Activated CD4-positive, alpha-beta T cell treated with anti-CD3 and anti-CD28 coated beads, Interleukin-2, amount 10 ng/mL, durations not matched to agents 7 days and 5 days (primary cell): ENCODE measurements at regions of chr6 and their contacts with region 1.

Region 1: DNA sequence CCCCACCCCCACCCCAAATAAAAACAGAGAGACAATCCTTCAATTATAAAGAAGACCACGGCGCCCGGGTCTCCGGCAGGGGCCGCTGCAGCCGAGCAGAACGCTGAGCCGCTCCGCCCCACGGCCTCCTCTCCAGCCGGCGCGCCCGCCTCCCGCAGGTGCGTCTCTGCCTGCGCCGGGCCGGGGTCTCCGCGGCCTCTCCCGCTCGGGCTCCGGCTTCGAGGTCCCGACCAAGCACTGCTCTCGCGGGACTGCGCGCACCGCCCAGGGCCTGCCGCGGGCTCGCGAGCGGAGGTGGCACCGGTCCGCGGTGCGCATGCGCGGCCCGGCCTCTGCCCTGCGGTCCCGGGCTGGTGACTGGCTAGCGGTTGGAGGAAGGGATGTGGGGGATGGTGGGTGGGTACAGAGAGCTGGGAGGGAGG is 241 bp upstream of the SIRT5 start:
- DNase-seq: peak; percentile 92
- H3K4me3 Mint-ChIP-seq: peak overlapping the region; percentile 88
- H3K27ac Mint-ChIP-seq: peak overlapping the region; percentile 98
- H3K4me1 Mint-ChIP-seq: peaks cover 34% of the 10 kb centered on the region
- H3K27me3 Mint-ChIP-seq: no peaks in the 10 kb centered on the region

Region 2: GRCh38 chr6:13328076-13328874 is 245.9 kb before region 1 on chr6 and contains the start of gene TBC1D7:
- CTCF ChIA-PET with region 1: interaction called, 12 read pairs
- POLR2A ChIA-PET with region 1: interaction called, 5 read pairs
- DNase-seq: peak; percentile 93
- H3K4me3 Mint-ChIP-seq: peak within 1 kb of the TSS; percentile 91
- H3K27ac Mint-ChIP-seq: peak within 1 kb of the TSS; percentile 97
- H3K4me1 Mint-ChIP-seq: peaks cover 29% of the 10 kb centered on the region
- H3K27me3 Mint-ChIP-seq: no peaks in the 10 kb centered on the region
- total RNA-seq, gene TBC1D7: 18.1 to 20.0 TPM

Region 3: DNA sequence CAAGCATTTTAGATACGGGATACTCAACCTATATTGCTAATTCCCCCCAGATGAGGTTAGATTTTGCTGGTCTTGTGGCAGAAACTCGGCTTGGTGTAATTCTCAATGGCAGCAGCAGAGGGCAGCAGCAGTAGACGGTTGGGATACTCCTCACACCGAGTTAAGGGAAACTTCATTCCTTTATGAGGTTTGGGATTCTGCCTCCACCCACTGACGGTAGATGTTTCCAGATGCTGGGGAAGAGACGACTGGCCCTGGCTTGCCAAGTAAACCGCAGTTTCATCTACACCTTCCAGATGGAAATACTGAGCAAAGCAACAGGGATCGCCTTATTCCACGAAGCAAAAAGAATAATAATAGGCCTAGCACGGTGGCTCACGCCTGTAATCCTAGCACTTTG is 237.6 kb before region 1 on chr6:
- CTCF ChIA-PET with region 1: interaction called, 17 read pairs
- POLR2A ChIA-PET with region 1: interaction called, 4 read pairs
- DNase-seq: peak; percentile 75
- H3K4me3 Mint-ChIP-seq: no peak overlapping the region
- H3K27ac Mint-ChIP-seq: no peak overlapping the region
- H3K4me1 Mint-ChIP-seq: peaks cover 32% of the 10 kb centered on the region
- H3K27me3 Mint-ChIP-seq: peaks cover 1% of the 10 kb centered on the region

Region 4: GRCh38 chr6:13561624-13562267 is 12.4 kb before region 1 on chr6:
- CTCF ChIA-PET with region 1: interaction called, 26 read pairs
- POLR2A ChIA-PET with region 1: interaction called, 6 read pairs
- DNase-seq: no peak
- H3K4me3 Mint-ChIP-seq: no peak overlapping the region
- H3K27ac Mint-ChIP-seq: no peak overlapping the region
- H3K4me1 Mint-ChIP-seq: no peaks in the 10 kb centered on the region
- H3K27me3 Mint-ChIP-seq: peaks cover 6% of the 10 kb centered on the region

Region 5: GRCh38 chr6:13586603-13587542 is 12.7 kb after region 1 on chr6:
- CTCF ChIA-PET with region 1: interaction called, 17 read pairs
- POLR2A ChIA-PET with region 1: no interaction called
- DNase-seq: no peak
- H3K4me3 Mint-ChIP-seq: no peak overlapping the region
- H3K27ac Mint-ChIP-seq: no peak overlapping the region
- H3K4me1 Mint-ChIP-seq: no peaks in the 10 kb centered on the region
- H3K27me3 Mint-ChIP-seq: no peaks in the 10 kb centered on the region

Region 6: DNA sequence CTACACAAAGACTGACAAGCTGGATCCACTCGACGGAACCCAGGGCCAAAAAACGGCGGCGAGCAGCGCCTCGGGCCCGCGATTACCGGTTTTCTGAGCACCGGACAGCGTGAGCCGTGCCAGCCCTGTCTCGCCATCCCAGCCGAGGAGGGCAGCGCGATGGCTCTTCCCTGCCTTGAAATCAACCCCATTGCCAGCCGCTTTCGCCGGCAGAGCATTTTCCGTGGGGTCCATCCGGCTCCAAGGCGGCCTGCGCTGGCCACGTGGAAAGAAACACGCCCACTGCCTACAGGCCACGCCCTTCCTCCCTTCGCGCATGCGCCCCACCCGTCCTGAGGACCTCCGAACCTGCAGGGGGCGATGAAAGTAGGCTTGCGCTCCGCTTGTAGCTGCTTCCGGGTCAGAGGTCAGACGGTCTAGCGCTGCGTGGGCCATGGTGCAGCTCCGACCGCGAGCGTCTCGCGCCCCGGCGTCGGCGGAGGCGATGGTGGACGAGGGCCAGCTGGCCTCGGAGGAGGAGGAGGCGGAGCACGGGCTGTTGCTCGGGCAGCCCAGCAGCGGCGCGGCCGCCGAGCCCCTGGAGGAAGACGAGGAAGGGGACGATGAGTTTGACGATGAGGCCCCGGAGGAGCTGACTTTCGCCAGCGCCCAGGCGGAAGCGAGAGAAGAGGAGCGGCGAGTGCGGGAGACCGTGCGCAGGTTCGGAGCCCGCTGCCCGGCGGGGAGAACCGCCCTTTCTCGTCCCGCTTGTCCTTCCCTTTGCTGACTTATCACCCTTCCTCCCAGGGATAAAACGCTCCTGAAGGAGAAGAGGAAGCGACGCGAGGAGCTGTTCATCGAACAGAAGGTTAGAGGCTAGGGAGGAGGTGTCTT is 41.0 kb after region 1 on chr6 and contains the start of gene NOL7:
- CTCF ChIA-PET with region 1: interaction called, 17 read pairs
- POLR2A ChIA-PET with region 1: interaction called, 3 read pairs
- DNase-seq: peak; percentile 99
- H3K4me3 Mint-ChIP-seq: peak within 1 kb of the TSS; percentile 92
- H3K27ac Mint-ChIP-seq: peak within 1 kb of the TSS; percentile 92
- H3K4me1 Mint-ChIP-seq: peaks cover 57% of the 10 kb centered on the region
- H3K27me3 Mint-ChIP-seq: no peaks in the 10 kb centered on the region
- total RNA-seq, gene NOL7: 53.5 to 57.7 TPM